Posterior vena cava (tissue), 2 donors: ENCODE measurements at regions of chr2 and their contacts with region 1.

Region 1: GRCh38 chr2:130181325-130181879 is at the start of gene SMPD4:
- DNase-seq: peak; percentile 99
- total RNA-seq, gene SMPD4: 26.5 to 29.7 TPM

Region 2: DNA sequence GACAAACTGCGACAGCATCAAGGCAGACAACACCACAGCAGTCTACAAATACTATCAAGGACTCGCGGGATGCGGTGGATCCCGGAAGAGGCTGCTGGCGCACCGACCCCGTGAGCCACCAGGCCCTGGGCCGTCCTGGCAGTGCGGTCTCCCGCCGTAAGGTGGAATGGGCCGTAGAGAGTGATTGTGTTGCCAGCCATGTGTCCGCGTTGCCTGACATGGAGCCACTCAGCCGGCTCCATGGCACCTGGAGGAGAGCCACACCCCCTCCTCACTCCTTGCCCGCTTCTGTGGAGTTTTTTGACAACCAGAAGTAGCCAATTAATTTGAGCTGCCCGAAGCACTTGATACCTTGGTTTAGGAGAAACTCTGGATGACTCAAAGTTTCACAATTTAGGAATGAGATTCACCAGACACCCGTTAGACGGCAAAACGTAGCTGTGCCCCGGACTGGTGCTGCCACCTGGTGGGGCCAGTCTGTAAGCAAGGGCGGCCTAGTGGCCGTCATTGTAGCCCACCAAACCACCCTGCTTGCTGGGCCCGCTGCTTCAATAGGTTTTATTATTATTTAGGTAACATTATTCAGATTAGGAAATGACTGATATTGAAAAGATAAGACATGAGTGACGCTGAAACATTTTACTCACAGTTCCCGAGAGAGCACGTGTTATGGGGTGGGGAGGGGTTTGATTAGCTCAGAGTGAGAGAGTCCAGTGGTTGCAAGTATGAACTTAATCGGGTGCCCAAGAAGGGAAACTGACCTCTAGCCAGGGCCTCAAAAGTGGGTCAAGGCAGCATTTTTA is 151.1 kb after region 1 on chr2:
- intact Hi-C with region 1: loop called in 1 of 2 experiments (anchors 10 kb)
- DNase-seq: peak; percentile 92